ENCODE measurements at regions of chr17 and their contacts with region 1.

Region 1: GRCh38 chr17:12358477-12358876 is 307.2 kb upstream of the MYOCD start:
- DNase-seq: peak; percentile 82

Region 2: DNA sequence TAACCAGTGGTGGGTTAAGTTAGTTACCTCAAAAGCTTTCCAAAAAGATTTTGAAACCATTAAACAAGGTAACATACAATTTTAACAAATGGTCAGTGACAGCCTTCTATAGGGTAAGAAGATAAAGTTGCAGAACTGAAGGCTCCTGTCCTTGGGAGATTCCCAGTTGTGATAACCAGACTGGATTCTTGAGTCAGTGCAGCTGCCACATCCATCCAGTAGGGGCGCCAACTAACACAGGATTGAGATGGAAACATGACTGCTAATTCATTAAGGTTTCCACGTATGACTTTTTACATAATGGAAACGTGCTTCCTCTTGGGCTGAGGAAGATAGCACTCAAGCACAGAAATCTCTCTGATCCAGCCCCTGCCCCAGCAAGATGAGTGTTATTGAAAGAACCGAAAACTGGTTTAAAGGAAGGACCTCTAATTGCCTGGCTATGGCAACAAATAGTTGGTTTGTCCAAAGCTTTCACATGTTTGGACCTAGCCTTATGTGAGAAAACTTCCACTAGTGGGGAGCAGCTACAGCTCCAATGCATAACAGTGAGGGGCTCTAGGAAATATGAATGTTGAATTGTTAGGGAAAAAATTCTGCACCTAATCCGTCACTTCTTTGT is 37.4 kb after region 1 on chr17:
- intact Hi-C with region 1: no loop called
- DNase-seq: no peak

Region 3: GRCh38 chr17:12415031-12415430 is 56.6 kb after region 1 on chr17:
- intact Hi-C with region 1: loop called in 1 of 2 experiments (anchors 5 kb)
- DNase-seq: no peak

Measured in posterior vena cava (tissue), 2 donors.